ENCODE measurements at regions of chr7 and their contacts with region 1.

Region 1: GRCh38 chr7:86939197-86939814 is 120.1 kb downstream of the ELAPOR2 start:
- DNase-seq: peak; percentile 76
- ATAC-seq: peak; percentile 86
- H3K4me3 ChIP-seq: no peak overlapping the region
- H3K27ac ChIP-seq: no peak overlapping the region
- H3K4me1 ChIP-seq: no peaks in the 10 kb centered on the region
- H3K27me3 ChIP-seq: peaks cover 3% of the 10 kb centered on the region; the same call in 1 of the 2 replicates
- CTCF ChIP-seq: peak; percentile 64; the same call in 1 of the 2 replicates

Region 2: DNA sequence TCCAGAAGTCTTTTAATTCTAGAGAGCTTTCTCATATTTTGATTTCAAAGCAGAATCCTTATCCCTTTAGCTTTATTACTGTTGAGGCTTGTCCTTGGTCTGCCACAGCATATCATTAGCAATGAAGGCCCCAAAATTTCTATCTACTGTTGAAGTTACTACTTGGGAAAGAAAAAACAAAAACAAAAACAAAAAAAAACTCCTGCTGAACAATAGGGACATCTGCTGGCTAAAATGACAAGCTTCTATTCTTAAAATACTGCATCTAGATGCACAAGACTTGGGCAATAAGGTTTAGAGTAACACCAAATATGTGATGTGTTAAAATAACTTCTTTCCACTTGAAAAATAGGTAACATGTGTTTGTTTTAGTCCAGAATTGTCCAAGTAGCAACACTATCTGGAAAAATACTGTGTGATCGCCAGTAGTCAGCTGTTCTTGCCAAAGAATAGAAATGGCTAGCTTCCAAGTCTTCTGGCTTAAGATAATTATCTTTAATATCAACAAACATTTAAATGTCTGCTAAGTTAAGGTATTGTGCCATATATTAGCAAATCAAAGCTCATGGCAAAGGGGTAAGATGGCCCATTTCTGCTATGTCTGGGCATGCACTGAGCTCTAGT is 209.1 kb after region 1 on chr7:
- CTCF ChIA-PET with region 1: interaction called, 5 read pairs
- POLR2A ChIA-PET with region 1: no interaction called
- in situ Hi-C with region 1: no loop called
- intact Hi-C with region 1: loop called (anchors 1 kb)
- DNase-seq: peak; percentile 42
- ATAC-seq: no peak
- H3K4me3 ChIP-seq: no peak overlapping the region
- H3K27ac ChIP-seq: no peak overlapping the region
- H3K4me1 ChIP-seq: peaks cover 7% of the 10 kb centered on the region
- H3K27me3 ChIP-seq: no peaks in the 10 kb centered on the region; the same call in none of the 2 replicates
- CTCF ChIP-seq: peak; percentile 64; the same call in 1 of the 2 replicates

Region 3: DNA sequence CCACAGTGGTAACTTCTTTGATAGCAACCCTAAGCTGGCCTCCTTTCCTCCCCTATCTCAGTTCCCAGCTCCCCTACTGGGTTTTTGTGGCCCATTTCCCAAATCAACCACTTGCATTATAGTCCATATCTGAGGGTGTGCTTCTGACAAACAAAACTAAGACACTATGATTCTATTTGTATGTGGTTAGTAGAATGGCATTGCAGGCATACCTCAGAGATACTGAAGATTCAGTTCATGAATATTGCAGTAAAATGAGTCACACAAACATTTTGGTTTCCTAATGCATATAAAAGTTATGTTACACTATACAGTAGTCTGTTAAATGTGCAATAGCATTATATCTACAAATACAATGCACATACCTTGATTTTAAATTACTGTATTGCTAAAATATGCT is 295.6 kb after region 1 on chr7:
- CTCF ChIA-PET with region 1: no interaction called
- POLR2A ChIA-PET with region 1: no interaction called
- in situ Hi-C with region 1: no loop called
- intact Hi-C with region 1: loop called (anchors 1 kb)
- DNase-seq: no peak
- ATAC-seq: no peak
- H3K4me3 ChIP-seq: no peak overlapping the region
- H3K27ac ChIP-seq: no peak overlapping the region
- H3K4me1 ChIP-seq: no peaks in the 10 kb centered on the region
- H3K27me3 ChIP-seq: peaks cover 4% of the 10 kb centered on the region; the same call in 1 of the 2 replicates
- CTCF ChIP-seq: no peak

Region 4: DNA sequence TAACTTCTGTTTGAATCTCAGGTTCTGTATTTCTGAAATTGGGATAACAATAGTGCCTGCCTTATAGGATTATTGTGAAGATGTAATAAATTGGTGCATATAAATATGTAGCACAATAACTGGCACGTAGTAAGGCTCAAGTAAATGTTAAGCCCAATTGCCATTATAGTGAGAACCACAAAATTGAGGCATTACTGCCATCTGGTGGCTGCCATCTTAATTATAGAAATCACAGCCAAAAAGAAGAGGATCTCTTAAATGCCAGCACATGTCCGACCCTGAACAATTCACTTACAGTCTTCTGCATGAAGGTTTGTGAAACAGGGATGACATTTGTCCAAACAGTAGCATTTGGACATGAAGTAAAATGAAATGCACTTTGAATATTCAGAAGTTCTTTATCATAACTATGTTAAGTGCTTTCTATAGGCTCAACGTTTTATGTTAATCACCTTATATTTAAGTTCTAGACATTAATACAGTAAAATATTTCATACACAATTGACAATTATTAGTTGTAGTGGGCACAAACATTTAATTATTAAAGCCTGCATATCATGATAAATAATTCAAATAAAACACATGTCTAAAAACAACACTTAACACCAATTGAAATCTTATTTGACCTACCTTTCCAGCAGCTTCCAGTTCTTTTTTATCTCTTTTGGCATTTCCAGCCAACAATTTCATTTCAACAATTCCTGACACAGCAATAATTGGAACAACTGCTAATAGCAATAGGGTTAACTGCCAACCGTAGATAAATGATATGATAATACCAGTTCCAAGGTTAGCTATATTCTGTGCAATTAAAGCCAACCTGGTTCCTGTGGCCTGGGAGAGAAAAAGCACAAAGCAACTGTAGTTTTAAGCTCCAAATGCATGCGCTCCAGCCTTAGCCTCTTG is 477.6 kb after region 1 on chr7:
- CTCF ChIA-PET with region 1: no interaction called
- POLR2A ChIA-PET with region 1: no interaction called
- in situ Hi-C with region 1: no loop called
- intact Hi-C with region 1: loop called (anchors 5 kb)
- DNase-seq: peak; percentile 68
- ATAC-seq: peak; percentile 87
- H3K4me3 ChIP-seq: no peak overlapping the region
- H3K27ac ChIP-seq: no peak overlapping the region
- H3K4me1 ChIP-seq: no peaks in the 10 kb centered on the region
- H3K27me3 ChIP-seq: no peaks in the 10 kb centered on the region
- CTCF ChIP-seq: peak; percentile 51; the same call in 1 of the 2 replicates